Left colon (tissue), 2 donors: ENCODE measurements at regions of chr9 and their contacts with region 1.

Region 1: DNA sequence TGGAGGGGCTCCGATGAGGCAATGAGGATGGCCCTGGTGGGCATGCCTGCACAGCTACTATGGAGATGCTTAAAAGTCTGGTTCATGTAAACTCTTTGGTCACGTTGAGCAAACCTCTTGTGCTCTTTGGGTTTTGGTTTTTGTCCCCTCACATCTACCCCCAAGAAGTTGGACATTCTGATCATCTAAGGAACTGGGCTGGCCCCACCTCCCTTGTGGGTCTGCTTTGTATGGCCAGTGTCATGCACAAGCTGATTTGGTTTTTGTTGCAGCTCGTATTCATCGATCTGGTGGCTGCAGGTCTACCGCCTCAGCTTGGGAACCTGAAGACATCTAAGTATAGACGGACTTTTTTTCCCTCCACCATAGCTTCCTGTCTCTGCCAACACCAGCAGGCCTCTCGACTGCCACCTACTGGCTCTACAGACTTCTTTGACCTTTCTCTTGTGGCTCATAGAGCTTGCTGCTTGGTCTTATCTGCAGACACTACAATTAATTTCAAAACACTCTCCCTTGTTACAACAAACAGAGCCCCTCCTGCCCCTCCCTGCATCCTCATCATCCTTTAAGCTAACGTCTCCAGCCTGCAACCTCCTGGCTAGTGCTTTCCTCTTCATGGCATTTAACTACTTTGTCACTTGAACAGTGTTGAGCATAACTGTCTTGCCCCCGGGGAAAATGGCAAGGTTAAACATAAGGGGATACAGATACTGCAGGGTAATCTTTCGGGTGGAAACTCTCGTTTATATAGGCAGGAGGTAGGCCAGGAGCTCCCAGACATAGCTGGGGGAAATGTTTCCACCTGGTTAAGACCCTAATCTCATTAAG is 34.5 kb downstream of the TSTD2 start:
- DNase-seq: peak; percentile 67 to 86
- ATAC-seq: peak; percentile 81

Region 2: DNA sequence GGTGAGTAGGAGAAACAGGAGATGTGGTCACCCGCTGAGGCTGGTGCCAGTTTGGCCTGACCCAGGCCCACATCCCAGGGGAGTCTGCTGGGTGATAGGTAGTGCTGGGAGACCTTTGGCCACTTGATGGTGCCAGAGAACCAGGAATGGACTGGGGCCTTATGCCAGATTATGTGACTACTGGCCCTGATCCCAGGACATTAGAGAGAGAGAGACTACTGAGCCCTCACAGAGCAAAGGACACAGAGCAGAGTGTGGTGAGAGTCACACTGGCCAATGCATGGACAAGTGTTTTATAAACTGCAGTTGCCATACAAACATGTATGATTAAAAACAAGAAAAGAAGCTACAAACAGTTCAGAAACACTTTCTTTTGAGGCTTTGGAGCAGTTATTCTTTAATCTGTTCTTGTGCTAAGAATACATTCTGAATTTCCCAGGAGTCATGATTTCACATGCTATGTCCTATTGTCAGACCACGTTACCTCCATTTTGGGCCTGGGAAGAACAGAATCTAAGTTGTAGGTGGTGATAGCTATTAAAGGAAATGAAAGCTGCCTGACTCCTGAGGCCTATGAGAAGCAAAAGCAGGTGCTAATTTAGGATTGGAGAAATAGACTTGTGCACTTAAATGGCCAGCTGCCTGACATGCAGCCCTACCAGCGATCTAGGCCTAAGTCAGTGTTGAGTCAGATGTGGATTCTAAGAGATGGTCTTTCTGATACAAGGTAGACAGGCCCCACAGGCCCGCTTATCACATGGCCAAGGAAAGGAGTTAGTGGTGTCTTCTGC is 129.8 kb before region 1 on chr9:
- intact Hi-C with region 1: loop called in 1 of 2 experiments (anchors 5 kb)
- DNase-seq: peak; percentile 61 to 66
- ATAC-seq: peak; percentile 98

Region 3: GRCh38 chr9:97501177-97501971 is 97.3 kb before region 1 on chr9 and contains the start of gene TMOD1:
- intact Hi-C with region 1: loop called in 1 of 2 experiments (anchors 10 kb)
- DNase-seq: peak; percentile 58 to 79
- ATAC-seq: peak; percentile 92
- total RNA-seq, gene TMOD1: 1.9 to 5.6 TPM